ENCODE measurements at regions of chr21 and their contacts with region 1.

Region 1: GRCh38 chr21:36989699-36990507 is 16.6 kb upstream of the RIPPLY3 start:
- DNase-seq: peak; percentile 92
- H3K4me3 Mint-ChIP-seq: peak overlapping the region; percentile 72
- H3K27ac Mint-ChIP-seq: peak overlapping the region; percentile 78
- H3K4me1 Mint-ChIP-seq: peaks cover 39% of the 10 kb centered on the region
- H3K27me3 Mint-ChIP-seq: no peaks in the 10 kb centered on the region

Region 2: GRCh38 chr21:36934864-36935420 is 55.0 kb before region 1 on chr21:
- CTCF ChIA-PET with region 1: interaction called, 10 read pairs
- POLR2A ChIA-PET with region 1: no interaction called
- intact Hi-C with region 1: no loop called
- DNase-seq: no peak
- H3K4me3 Mint-ChIP-seq: no peak overlapping the region
- H3K27ac Mint-ChIP-seq: no peak overlapping the region
- H3K4me1 Mint-ChIP-seq: no peaks in the 10 kb centered on the region
- H3K27me3 Mint-ChIP-seq: no peaks in the 10 kb centered on the region

Region 3: GRCh38 chr21:36976882-36977651 is 12.8 kb before region 1 on chr21:
- CTCF ChIA-PET with region 1: interaction called, 33 read pairs
- POLR2A ChIA-PET with region 1: interaction called, 3 read pairs
- intact Hi-C with region 1: loop called (anchors 1 kb)
- DNase-seq: peak; percentile 63
- H3K4me3 Mint-ChIP-seq: no peak overlapping the region
- H3K27ac Mint-ChIP-seq: peak overlapping the region; percentile 40
- H3K4me1 Mint-ChIP-seq: peaks cover 21% of the 10 kb centered on the region
- H3K27me3 Mint-ChIP-seq: peaks cover 11% of the 10 kb centered on the region

Region 4: DNA sequence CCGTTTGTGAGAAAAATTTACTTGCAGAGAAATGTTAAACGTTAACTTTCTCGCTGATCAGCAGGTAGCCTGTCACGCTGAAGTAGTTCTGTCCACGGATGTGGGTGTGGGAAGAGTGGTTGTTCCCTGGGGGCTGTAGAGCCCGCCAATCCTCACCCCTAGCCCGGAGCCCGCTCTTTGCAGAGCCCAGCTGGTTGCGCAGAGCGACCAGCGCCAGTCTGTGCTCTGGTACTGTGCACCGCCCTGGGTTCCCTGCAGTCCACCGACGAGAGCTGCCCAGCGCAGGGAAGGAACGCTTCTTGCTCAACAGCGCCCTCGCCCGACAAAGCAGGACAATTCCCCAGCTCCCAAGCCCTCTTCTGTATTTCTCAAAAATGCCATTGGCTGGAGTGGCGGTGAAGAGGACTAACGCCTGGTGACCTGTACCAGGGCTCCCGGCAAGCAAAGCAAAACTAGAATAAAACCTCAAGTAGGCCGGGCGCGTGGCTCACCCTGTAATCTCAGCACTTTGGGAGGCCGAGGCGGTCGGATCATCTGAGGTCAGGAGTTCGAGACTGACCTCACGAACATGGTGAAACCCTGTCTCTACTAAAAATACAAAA is 19.9 kb after region 1 on chr21:
- CTCF ChIA-PET with region 1: interaction called, 16 read pairs
- POLR2A ChIA-PET with region 1: no interaction called
- intact Hi-C with region 1: no loop called
- DNase-seq: peak; percentile 88
- H3K4me3 Mint-ChIP-seq: peak overlapping the region; percentile 53
- H3K27ac Mint-ChIP-seq: peak overlapping the region; percentile 15
- H3K4me1 Mint-ChIP-seq: peaks cover 16% of the 10 kb centered on the region
- H3K27me3 Mint-ChIP-seq: peaks cover 37% of the 10 kb centered on the region

Region 5: GRCh38 chr21:37106998-37107397 is 117.1 kb after region 1 on chr21:
- CTCF ChIA-PET with region 1: no interaction called
- POLR2A ChIA-PET with region 1: no interaction called
- intact Hi-C with region 1: no loop called
- DNase-seq: no peak
- H3K4me3 Mint-ChIP-seq: no peak overlapping the region
- H3K27ac Mint-ChIP-seq: no peak overlapping the region
- H3K4me1 Mint-ChIP-seq: no peaks in the 10 kb centered on the region
- H3K27me3 Mint-ChIP-seq: no peaks in the 10 kb centered on the region

Region 6: DNA sequence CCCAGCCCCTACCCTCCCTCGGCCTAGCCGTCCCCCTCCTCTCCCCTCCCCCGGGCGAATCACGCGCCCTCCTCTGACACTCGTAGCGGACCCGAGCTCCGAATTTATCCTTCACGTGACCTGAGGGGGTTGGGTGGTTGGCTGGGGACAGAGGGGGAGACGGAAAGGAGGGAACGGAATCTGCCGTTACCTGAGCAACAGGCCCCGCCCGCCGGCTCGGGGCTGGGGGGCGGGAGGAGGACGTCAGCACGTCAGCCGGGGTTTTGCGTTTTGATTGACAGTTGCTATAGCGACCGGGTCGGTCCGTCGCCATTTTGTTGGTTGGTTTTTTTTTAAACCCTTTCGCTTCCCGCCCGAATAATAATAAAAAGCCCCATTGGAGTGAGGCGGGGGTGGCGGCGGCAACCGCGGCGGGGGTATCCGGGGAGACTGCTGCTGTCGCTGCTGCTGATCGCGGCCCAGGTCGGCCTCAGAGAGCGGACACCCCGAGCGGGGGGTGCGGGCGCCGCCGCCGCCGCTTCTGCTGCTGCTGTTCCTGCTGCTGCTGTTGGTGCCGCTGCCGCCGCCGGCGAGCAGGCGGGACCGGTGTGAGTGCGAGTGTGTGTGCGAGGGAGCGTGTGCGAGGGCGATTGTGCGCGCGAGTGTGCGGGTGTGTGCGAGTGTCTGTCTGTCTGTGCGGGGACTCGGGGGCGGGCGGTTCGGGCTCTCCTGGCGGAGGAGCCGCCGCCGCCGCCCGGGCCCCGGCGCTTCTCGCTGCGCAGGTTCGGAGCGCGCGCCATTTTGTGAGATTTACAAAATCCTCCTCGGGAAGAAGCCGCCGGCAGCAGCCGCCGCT is 376.8 kb after region 1 on chr21 and contains the start of gene DYRK1A:
- CTCF ChIA-PET with region 1: no interaction called
- POLR2A ChIA-PET with region 1: no interaction called
- intact Hi-C with region 1: loop called (anchors 10 kb)
- DNase-seq: peak; percentile 99
- H3K4me3 Mint-ChIP-seq: peak within 1 kb of the TSS; percentile 98
- H3K27ac Mint-ChIP-seq: peak within 1 kb of the TSS; percentile 99
- H3K4me1 Mint-ChIP-seq: peaks cover 34% of the 10 kb centered on the region
- H3K27me3 Mint-ChIP-seq: no peaks in the 10 kb centered on the region
- total RNA-seq, gene DYRK1A: 47.6 to 51.1 TPM

Measured in activated CD4-positive, alpha-beta memory T cell treated with anti-CD3 and anti-CD28 coated beads for 36 hours (primary cell).